ENCODE measurements at regions of chr4 and their contacts with region 1.

Region 1: GRCh38 chr4:109702950-109703663 is at the start of gene CASP6:
- H3K4me3 Mint-ChIP-seq: peak within 1 kb of the TSS; percentile 83
- H3K27ac Mint-ChIP-seq: peak within 1 kb of the TSS; percentile 92
- H3K4me1 Mint-ChIP-seq: peaks cover 32% of the 10 kb centered on the region
- H3K27me3 Mint-ChIP-seq: peaks cover 2% of the 10 kb centered on the region

Region 2: DNA sequence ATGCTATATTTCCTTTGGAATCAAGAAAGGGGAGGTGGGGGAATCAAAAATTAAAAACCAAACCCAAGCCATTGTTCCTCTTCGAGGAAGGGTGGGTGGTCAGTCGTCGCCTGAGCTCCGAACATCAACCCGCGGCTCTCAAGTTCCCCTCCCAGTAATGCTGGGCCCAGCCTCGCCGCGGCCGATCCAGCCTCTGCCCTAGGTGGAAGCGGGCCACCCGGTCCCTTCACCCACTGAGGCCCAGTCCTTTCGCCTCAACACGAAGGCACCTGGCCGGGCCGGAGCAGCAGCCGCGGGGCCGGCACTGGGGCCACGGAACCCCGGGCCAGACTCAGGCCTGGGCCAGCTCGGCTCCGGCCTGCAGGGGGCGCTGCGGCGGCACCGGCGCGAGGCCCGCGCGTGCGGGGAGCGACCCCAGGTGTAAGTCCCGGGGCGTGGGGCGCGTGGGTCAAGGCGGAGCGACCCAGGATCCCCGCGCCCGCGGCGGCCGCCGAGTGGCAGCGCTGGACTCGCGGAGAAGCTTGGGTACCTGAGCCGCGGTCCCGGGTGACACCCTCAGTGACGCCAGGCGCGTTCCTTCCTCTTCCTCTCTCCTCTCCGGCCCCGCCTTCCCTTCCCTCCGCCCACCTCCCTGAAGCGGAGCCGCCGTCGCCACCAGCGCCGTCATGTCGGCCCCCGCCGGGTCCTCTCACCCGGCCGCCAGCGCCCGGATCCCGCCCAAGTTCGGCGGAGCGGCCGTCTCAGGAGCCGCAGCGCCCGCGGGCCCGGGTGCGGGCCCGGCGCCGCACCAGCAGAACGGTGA is 269.7 kb before region 1 on chr4 and contains the start of gene SEC24B:
- intact Hi-C with region 1: loop called (anchors 5 kb)
- H3K4me3 Mint-ChIP-seq: peak within 1 kb of the TSS; percentile 79
- H3K27ac Mint-ChIP-seq: peak within 1 kb of the TSS; percentile 86
- H3K4me1 Mint-ChIP-seq: peaks cover 23% of the 10 kb centered on the region
- H3K27me3 Mint-ChIP-seq: no peaks in the 10 kb centered on the region

Region 3: GRCh38 chr4:109559983-109560686 is 143.0 kb before region 1 on chr4 and contains the start of gene MCUB:
- intact Hi-C with region 1: loop called (anchors 5 kb)
- H3K4me3 Mint-ChIP-seq: peak within 1 kb of the TSS; percentile 84
- H3K27ac Mint-ChIP-seq: peak within 1 kb of the TSS; percentile 92
- H3K4me1 Mint-ChIP-seq: peaks cover 29% of the 10 kb centered on the region
- H3K27me3 Mint-ChIP-seq: no peaks in the 10 kb centered on the region

Region 4: DNA sequence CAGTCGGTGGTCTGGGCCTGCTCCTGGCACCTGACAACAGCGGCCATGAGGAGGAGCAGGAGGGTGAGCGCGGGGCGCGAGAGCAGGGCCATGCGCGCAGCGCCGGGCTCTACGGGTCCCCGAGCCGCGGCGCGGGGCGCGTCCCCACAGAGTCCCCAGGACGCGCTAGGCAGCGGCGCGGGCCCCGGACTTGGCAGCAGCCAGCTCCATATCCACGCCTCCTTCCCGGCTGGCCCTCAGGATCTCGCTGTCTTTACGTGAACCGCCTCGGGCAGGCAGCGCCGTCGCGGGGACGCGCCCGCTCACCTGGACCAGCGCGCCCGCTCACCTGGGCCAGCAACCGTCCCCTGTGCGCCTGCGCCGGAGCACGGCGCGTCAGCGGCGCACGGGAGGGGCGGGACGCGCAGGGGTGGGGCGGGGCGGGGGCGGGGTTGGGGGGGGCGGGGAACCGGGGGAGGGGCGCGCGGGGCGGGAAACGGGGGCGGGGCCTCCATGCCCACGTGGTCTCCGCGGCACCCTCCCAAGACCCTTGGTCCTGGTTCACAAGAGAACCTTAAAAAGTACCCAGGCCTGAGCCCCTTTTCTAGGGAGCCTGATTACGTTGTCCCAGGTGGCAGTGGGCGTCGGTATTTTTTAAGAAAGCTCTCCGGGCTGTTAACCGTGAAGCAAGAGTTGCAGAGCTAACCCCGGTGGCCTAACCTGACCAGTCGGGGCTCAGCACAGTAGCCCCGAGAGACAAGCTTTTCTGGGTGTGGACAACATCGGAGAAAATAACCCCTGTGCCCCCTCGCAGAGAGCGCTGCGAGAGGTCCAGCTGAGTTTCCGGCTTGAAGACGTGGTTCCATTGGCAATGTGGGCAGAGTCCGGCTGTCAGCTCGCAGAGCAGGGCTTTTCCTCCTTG is 26.9 kb after region 1 on chr4 and contains the start of gene PLA2G12A:
- intact Hi-C with region 1: loop called (anchors 2 kb)
- H3K4me3 Mint-ChIP-seq: peak within 1 kb of the TSS; percentile 87
- H3K27ac Mint-ChIP-seq: peak within 1 kb of the TSS; percentile 80
- H3K4me1 Mint-ChIP-seq: peaks cover 17% of the 10 kb centered on the region
- H3K27me3 Mint-ChIP-seq: peaks cover 6% of the 10 kb centered on the region

Region 5: DNA sequence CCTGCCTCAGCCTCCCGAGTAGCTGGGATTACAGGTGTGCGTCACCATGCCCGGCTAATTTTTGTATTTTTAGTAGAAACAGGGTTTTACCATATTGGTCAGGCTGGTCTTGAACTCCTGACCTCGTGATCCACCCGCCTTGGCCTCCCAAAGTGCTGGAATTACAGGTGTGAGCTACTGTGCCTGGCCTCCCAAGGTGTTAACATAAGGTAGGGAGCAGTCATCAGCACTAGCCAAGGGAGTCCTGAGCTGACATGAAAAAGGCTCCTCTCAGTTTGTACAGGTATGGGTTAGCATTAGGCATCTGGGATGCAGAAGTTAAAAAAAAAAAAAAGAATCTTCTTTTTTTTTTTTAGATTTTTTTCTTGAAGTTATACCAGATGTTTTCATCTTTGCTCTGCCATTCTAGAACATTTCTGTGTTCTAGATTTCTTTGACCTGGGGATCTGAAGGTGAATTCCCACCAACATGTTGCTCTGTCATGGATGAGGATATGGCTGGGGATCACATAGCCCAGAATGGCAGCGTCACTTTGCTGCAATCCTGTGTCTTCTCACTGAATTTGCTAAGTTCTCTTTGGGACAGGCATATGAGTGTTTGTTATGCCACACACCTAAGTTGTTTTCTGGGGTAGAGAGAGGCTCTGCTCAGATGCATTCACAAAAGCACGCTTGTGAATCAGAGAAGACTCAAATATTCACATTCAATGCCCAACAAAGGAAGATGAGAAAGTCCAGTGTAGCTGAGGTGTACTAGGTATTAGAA is 51.2 kb after region 1 on chr4:
- intact Hi-C with region 1: no loop called
- H3K4me3 Mint-ChIP-seq: no peak overlapping the region
- H3K27ac Mint-ChIP-seq: no peak overlapping the region
- H3K4me1 Mint-ChIP-seq: peaks cover 12% of the 10 kb centered on the region
- H3K27me3 Mint-ChIP-seq: no peaks in the 10 kb centered on the region

Region 6: GRCh38 chr4:109803924-109804571 is 100.9 kb after region 1 on chr4:
- intact Hi-C with region 1: loop called (anchors 2 kb)
- H3K4me3 Mint-ChIP-seq: no peak overlapping the region
- H3K27ac Mint-ChIP-seq: no peak overlapping the region
- H3K4me1 Mint-ChIP-seq: peaks cover 11% of the 10 kb centered on the region
- H3K27me3 Mint-ChIP-seq: no peaks in the 10 kb centered on the region

Region 7: GRCh38 chr4:109815151-109816081 is 112.3 kb after region 1 on chr4 and contains the start of gene GAR1:
- intact Hi-C with region 1: loop called (anchors 1 kb)
- H3K4me3 Mint-ChIP-seq: peak within 1 kb of the TSS; percentile 89
- H3K27ac Mint-ChIP-seq: peak within 1 kb of the TSS; percentile 93
- H3K4me1 Mint-ChIP-seq: peaks cover 46% of the 10 kb centered on the region
- H3K27me3 Mint-ChIP-seq: no peaks in the 10 kb centered on the region

Region 8: GRCh38 chr4:109977854-109978501 is 274.9 kb after region 1 on chr4:
- intact Hi-C with region 1: loop called (anchors 10 kb)
- H3K4me3 Mint-ChIP-seq: no peak overlapping the region
- H3K27ac Mint-ChIP-seq: no peak overlapping the region
- H3K4me1 Mint-ChIP-seq: peaks cover 14% of the 10 kb centered on the region
- H3K27me3 Mint-ChIP-seq: peaks cover 24% of the 10 kb centered on the region

Measured in dendritic cell treated with granulocyte-macrophage colony-stimulating factor and Interleukin-4, amounts not matched to agents 40 ng/mL and 50 ng/mL, for 4 days (primary cell).